ENCODE measurements at regions of chr15 and their contacts with region 1.

Region 1: GRCh38 chr15:45993508-45993907 is 358.7 kb downstream of the SQOR start:
- DNase-seq: no peak
- ATAC-seq: peak in 6 of 8 donors; percentile 66 to 87 (median 77)
- H3K4me3 ChIP-seq: no peak overlapping the region
- H3K27ac ChIP-seq: peak overlapping the region in 1 of 10 donors; percentile 49
- H3K4me1 ChIP-seq: peaks cover 0 to 24% (median 5%) of the 10 kb centered on the region in 9 donors
- H3K27me3 ChIP-seq: no peaks in the 10 kb centered on the region
- CTCF ChIP-seq: no peak

Region 2: GRCh38 chr15:45611305-45611704 is 382.2 kb before region 1 on chr15:
- intact Hi-C with region 1: no loop called
- DNase-seq: no peak
- ATAC-seq: no peak
- H3K4me3 ChIP-seq: no peak overlapping the region
- H3K27ac ChIP-seq: no peak overlapping the region
- H3K4me1 ChIP-seq: peaks cover 0 to 11% (median 0%) of the 10 kb centered on the region in 9 donors
- H3K27me3 ChIP-seq: no peaks in the 10 kb centered on the region
- CTCF ChIP-seq: peak in 6 of 9 donors; percentile 31 to 54 (median 46)

Region 3: DNA sequence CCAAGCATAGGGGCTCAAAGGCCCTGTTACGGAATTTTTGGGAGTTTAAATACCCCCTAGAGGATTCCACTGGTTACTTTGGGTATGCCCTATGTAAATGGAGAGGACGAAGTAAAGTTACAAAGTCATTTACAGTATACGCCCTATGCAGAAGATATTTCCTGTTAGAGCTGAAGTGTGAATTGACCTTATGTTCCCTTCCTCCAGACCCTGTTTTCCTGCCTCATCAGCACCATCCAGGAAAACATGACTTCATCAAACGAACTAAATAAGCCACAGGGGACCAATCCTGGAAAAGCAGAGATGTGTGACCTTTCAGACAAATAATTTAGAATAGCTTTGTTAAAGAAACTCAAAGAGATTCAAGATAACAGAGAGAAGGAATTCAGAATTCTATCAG is 181.3 kb before region 1 on chr15:
- intact Hi-C with region 1: loop called in 1 of 10 experiments (anchors 10 kb)
- DNase-seq: no peak
- ATAC-seq: peak in 4 of 8 donors; percentile 42 to 66 (median 50)
- H3K4me3 ChIP-seq: no peak overlapping the region
- H3K27ac ChIP-seq: no peak overlapping the region
- H3K4me1 ChIP-seq: peaks cover 0 to 14% (median 6%) of the 10 kb centered on the region in 9 donors
- H3K27me3 ChIP-seq: no peaks in the 10 kb centered on the region
- CTCF ChIP-seq: no peak

Region 4: GRCh38 chr15:45884289-45884688 is 109.2 kb before region 1 on chr15:
- intact Hi-C with region 1: no loop called
- DNase-seq: no peak
- ATAC-seq: no peak
- H3K4me3 ChIP-seq: no peak overlapping the region
- H3K27ac ChIP-seq: peak overlapping the region in 1 of 10 donors; percentile 20
- H3K4me1 ChIP-seq: peaks cover 0 to 14% (median 0%) of the 10 kb centered on the region in 9 donors
- H3K27me3 ChIP-seq: no peaks in the 10 kb centered on the region
- CTCF ChIP-seq: no peak

Region 5: DNA sequence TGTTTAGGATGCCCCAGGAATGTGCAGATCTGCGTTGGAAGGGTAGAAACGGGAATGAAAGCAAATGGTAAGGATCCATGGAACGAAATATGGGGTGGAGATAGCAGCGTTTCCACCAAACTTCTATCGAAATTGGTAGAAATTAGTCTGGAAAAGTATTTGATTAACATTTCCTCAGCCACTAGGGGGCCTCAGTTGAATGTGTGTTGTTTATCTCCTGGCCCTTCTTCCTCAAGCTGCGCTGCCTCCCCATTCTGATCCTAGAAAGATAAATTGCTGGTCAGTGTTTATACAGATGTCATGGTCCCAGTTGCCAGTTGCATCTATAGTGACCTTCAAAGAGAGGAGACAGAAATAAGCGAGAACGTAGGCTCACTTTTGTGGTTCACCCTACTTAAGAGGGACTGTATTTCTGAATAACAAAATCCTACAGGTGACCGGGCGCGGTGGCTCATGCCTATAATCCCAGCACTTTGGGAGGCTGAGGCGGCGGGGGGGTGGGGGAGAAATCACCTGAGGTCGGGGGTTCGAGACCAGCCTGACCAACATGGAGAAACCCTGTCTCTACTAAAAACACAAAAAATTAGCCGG is 98.4 kb after region 1 on chr15:
- intact Hi-C with region 1: loop called in 1 of 10 experiments (anchors 1 kb)
- DNase-seq: peak in 1 of 2 donors; percentile 16
- ATAC-seq: no peak
- H3K4me3 ChIP-seq: no peak overlapping the region
- H3K27ac ChIP-seq: no peak overlapping the region
- H3K4me1 ChIP-seq: peaks cover 0 to 25% (median 8%) of the 10 kb centered on the region in 9 donors
- H3K27me3 ChIP-seq: no peaks in the 10 kb centered on the region
- CTCF ChIP-seq: peak in 8 of 9 donors; percentile 12 to 62 (median 46)

Measured in heart right ventricle (tissue), 16 donors.